Aorta (tissue), 5 donors: ENCODE measurements at regions of chr16 and their contacts with region 1.

Region 1: DNA sequence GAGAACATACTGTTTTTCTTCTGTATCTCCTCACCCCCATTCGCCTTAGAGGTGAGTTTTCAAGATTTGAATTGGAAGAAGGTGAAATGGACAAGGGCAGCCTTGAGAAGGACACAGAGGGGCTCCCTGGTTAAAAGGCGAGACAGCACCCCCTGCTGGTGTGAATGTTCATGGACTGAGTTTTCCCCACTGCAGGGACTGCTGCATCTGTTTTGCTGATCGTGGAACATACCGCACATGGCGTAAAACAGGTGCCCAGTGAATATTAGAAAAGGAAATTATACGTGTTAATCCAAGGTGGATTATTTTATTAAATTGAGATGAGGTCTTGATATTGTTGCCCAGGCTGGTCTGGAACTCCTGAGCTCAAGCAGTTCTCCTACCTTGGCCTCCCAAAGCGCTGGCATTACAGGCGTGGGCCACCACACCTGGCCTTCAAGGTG is 54.5 kb downstream of the NDE1 start:
- DNase-seq: peak; percentile 81 to 89
- ATAC-seq: peak; percentile 66
- H3K4me3 ChIP-seq: no peak overlapping the region
- H3K27ac ChIP-seq: no peak overlapping the region
- H3K4me1 ChIP-seq: no peaks in the 10 kb centered on the region
- H3K27me3 ChIP-seq: no peaks in the 10 kb centered on the region

Region 2: DNA sequence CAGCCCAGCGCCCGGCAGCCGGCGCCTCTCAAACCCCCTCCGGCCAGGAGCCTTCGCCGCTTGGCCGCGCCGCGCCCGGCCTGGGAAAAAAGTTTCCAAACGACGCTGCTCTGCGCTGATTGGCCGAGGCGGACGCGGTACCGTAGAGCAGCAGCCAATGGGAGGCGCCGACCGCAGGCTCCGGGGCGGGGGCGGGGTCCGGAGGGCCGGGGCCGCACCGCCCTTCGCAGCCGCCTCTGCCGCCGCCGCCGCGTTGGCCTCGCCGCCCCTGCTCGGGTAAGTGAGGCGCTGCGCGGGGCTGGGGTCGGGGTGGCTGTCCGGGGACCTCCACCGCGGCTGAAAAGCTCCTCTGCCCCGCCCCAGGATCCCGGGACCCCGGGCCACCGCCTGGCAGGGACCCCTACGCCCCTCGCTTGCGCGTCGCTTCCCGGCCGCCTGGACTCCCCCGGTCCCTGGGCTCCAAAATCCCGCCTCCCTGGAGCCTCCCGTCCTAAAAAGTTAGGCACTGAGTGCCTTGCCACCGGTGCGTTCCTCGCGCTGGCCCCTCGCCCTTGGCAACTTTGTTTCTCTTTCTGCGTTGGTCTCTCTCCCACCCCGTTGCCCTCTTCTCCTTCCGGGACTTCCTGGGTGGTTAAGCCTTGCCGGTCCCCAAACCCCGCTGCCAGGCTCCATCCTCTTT is 54.4 kb before region 1 on chr16 and contains the start of gene NDE1:
- intact Hi-C with region 1: loop called (anchors 5 kb)
- DNase-seq: peak; percentile 95 to 98
- ATAC-seq: peak; percentile 98
- H3K4me3 ChIP-seq: peak within 1 kb of the TSS; percentile 69 to 86
- H3K27ac ChIP-seq: peak within 1 kb of the TSS in 1 of 2 donors; percentile 49
- H3K4me1 ChIP-seq: no peaks in the 10 kb centered on the region
- H3K27me3 ChIP-seq: no peaks in the 10 kb centered on the region
- total RNA-seq, gene NDE1: 32.0 to 42.8 TPM